Activated CD4-positive, alpha-beta T cell treated with anti-CD3 and anti-CD28 coated beads, Interleukin-2, amount 10 ng/mL, durations not matched to agents 24 days and 14 days (primary cell): ENCODE measurements at regions of chr17 and their contacts with region 1.

Region 1: GRCh38 chr17:32319548-32319905 is 22.4 kb downstream of the C17orf75 start:
- DNase-seq: peak; percentile 94
- H3K4me3 Mint-ChIP-seq: peak overlapping the region; percentile 86
- H3K27ac Mint-ChIP-seq: no peak overlapping the region
- H3K4me1 Mint-ChIP-seq: peaks cover 26% of the 10 kb centered on the region
- H3K27me3 Mint-ChIP-seq: peaks cover 22% of the 10 kb centered on the region

Region 2: DNA sequence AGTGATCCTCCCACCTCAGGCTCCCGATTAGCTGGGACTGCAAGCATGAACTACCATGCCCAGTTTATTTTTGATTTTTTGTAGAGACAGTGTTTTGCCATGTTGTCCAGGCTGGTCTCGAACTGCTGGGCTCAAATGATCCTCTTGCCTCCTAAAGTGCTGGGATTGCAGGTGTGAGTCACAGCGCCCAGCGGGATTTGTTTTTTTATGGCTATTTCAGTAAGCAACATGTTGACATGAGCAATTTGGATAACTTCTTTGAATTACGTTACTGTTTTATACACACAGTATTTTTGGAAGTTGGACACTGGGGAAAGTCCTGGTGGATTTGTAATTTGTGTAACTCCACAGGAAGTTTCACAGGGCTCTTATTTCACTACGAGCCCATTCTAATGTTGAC is 195.7 kb before region 1 on chr17:
- intact Hi-C with region 1: no loop called
- DNase-seq: no peak
- H3K4me3 Mint-ChIP-seq: no peak overlapping the region
- H3K27ac Mint-ChIP-seq: no peak overlapping the region
- H3K4me1 Mint-ChIP-seq: peaks cover 18% of the 10 kb centered on the region
- H3K27me3 Mint-ChIP-seq: peaks cover 2% of the 10 kb centered on the region

Region 3: GRCh38 chr17:32206861-32207260 is 112.7 kb before region 1 on chr17:
- intact Hi-C with region 1: loop called (anchors 5 kb)
- DNase-seq: no peak
- H3K4me3 Mint-ChIP-seq: no peak overlapping the region
- H3K27ac Mint-ChIP-seq: no peak overlapping the region
- H3K4me1 Mint-ChIP-seq: no peaks in the 10 kb centered on the region
- H3K27me3 Mint-ChIP-seq: no peaks in the 10 kb centered on the region

Region 4: GRCh38 chr17:32253117-32253611 is 66.4 kb before region 1 on chr17:
- intact Hi-C with region 1: loop called (anchors 1 kb)
- DNase-seq: peak; percentile 94
- H3K4me3 Mint-ChIP-seq: no peak overlapping the region
- H3K27ac Mint-ChIP-seq: no peak overlapping the region
- H3K4me1 Mint-ChIP-seq: no peaks in the 10 kb centered on the region
- H3K27me3 Mint-ChIP-seq: peaks cover 21% of the 10 kb centered on the region

Region 5: GRCh38 chr17:32265192-32265923 is 54.2 kb before region 1 on chr17 and contains the start of gene RHBDL3:
- intact Hi-C with region 1: loop called (anchors 5 kb)
- DNase-seq: peak; percentile 76
- H3K4me3 Mint-ChIP-seq: peak within 1 kb of the TSS; percentile 74
- H3K27ac Mint-ChIP-seq: peak within 1 kb of the TSS; percentile 31
- H3K4me1 Mint-ChIP-seq: peaks cover 20% of the 10 kb centered on the region
- H3K27me3 Mint-ChIP-seq: peaks cover 74% of the 10 kb centered on the region
- total RNA-seq, gene RHBDL3: 0.12 and 0.31 TPM in 2 replicates